Posterior vena cava (tissue), 2 donors: ENCODE measurements at regions of chr13 and their contacts with region 1.

Region 1: GRCh38 chr13:112424098-112424497 is 47.9 kb downstream of the SPACA7 start:
- DNase-seq: no peak

Region 2: DNA sequence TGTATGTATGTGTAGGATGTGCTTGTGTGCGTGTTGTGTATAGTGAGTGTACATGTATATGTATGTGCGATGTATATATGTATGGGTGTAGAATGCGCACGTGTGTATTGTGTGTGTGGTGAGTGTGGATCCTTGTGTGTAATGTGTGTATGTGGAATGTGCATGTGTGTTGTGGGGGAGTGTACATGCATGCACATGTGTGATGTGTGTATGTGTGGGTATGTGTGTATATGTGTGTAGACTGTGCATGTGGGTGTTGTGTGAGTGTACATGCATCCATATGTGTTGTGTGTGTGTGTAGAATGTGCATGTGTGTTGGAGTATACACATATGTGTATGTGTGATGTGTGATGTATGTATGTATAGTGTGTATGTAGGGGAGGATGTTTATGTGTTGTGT is 65.9 kb before region 1 on chr13:
- intact Hi-C with region 1: loop called in 1 of 2 experiments (anchors 1 kb)
- DNase-seq: no peak